Body of pancreas (tissue), 4 donors: ENCODE measurements at regions of chr20 and their contacts with region 1.

Region 1: DNA sequence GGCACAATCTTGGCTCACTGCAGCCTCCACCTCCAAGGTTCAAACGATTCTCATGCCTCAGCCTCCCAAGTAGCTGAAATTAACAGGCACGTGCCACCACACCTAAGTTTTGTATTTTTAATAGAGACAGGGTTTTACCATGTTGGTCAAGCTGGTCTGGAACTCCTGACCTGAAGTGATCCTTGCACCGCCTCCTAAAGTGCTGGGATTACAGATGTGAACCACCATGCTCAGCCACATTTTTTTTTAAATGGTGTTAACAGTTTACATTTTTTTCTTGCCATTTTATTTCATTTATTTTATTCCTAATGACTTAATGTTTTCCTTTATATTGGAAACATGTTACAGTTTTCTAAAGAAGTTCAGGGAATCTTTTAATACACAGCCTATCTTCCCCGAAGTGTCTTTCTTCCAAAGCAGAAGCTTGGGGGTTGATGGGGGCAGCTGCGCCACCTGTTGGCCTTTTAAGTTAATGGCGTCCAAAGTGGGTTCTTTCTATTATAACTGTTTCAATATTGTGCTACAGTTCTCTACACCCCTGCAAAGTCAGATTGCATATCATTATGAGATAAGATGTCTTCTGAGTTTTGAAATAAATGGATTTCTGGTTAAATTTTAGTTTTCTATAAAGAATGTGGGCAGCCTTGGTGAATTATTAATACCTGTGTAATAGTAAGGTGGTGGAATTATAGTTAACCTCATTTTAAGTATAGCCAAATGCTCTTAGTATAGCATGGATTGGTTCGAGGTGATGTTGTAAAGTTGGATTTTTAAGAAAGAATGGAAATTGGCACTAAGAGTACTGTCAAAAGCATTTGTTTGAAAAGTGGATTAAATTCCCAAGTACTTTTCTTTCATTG is 42.0 kb upstream of the PLCG1 start:
- DNase-seq: peak; percentile 49 to 61 (median 58)
- ATAC-seq: peak; percentile 58
- H3K4me3 ChIP-seq: no peak overlapping the region
- H3K27ac ChIP-seq: no peak overlapping the region
- H3K4me1 ChIP-seq: no peaks in the 10 kb centered on the region
- H3K27me3 ChIP-seq: no peaks in the 10 kb centered on the region
- CTCF ChIP-seq: peak; percentile 71 to 79 (median 77)
- POLR2A ChIP-seq: no peak

Region 2: GRCh38 chr20:40966103-40966502 is 129.2 kb before region 1 on chr20:
- intact Hi-C with region 1: loop called (anchors 5 kb)
- DNase-seq: no peak
- ATAC-seq: no peak
- H3K4me3 ChIP-seq: no peak overlapping the region
- H3K27ac ChIP-seq: no peak overlapping the region
- H3K4me1 ChIP-seq: peaks cover 8% of the 10 kb centered on the region
- H3K27me3 ChIP-seq: no peaks in the 10 kb centered on the region
- CTCF ChIP-seq: no peak
- POLR2A ChIP-seq: no peak

Region 3: DNA sequence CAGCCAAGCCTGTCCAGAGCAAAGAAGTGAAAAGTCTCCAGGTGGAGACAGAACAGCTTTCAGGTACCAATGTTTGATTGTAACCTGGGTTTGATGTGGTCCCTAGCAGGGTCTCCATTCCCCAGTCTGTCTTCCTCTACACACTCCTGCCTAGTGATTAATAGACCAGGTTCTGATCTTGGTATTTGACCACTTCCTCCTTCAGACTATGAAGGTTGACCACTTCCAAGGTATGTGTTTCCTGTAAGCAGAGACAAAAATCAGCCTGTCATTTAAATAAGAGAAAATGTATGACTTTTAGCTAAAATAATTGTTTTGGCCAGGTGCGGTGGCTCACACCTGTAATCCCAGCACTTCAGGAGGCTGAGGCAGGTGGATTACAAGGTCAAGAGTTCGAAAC is 108.6 kb before region 1 on chr20:
- intact Hi-C with region 1: loop called (anchors 5 kb)
- DNase-seq: no peak
- ATAC-seq: no peak
- H3K4me3 ChIP-seq: no peak overlapping the region
- H3K27ac ChIP-seq: no peak overlapping the region
- H3K4me1 ChIP-seq: peaks cover 6% of the 10 kb centered on the region
- H3K27me3 ChIP-seq: no peaks in the 10 kb centered on the region
- CTCF ChIP-seq: no peak
- POLR2A ChIP-seq: no peak